Adrenal gland (tissue), 19 donors: ENCODE measurements at regions of chr4 and their contacts with region 1.

Region 1: GRCh38 chr4:56544573-56545131 is 39.1 kb downstream of the ARL9 start:
- DNase-seq: peak; percentile 82 to 92 (median 89)
- H3K4me3 ChIP-seq: peak overlapping the region in 1 of 4 donors; percentile 56
- H3K27ac ChIP-seq: peak overlapping the region in 1 of 5 donors; percentile 30
- H3K4me1 ChIP-seq: peaks cover 0 to 4% of the 10 kb centered on the region in 2 donors
- H3K27me3 ChIP-seq: no peaks in the 10 kb centered on the region
- CTCF ChIP-seq: peak; percentile 84 to 99 (median 95)
- POLR2A ChIP-seq: no peak

Region 2: GRCh38 chr4:56424697-56425514 is 119.7 kb before region 1 on chr4:
- intact Hi-C with region 1: loop called in 1 of 2 experiments (anchors 10 kb)
- DNase-seq: peak in 5 of 7 donors; percentile 31 to 65 (median 49)
- H3K4me3 ChIP-seq: no peak overlapping the region
- H3K27ac ChIP-seq: no peak overlapping the region
- H3K4me1 ChIP-seq: peaks cover 7 to 13% of the 10 kb centered on the region in 2 donors
- H3K27me3 ChIP-seq: no peaks in the 10 kb centered on the region
- CTCF ChIP-seq: peak; percentile 41 to 78 (median 62)
- POLR2A ChIP-seq: no peak